Cardiac septum (tissue), 1 donor: ENCODE measurements at regions of chr1 and their contacts with region 1.

Region 1: GRCh38 chr1:175481126-175482066 is 262.0 kb downstream of the TNR start:
- DNase-seq: no peak

Region 2: GRCh38 chr1:175742790-175743459 is 261.5 kb after region 1 on chr1:
- intact Hi-C with region 1: loop called (anchors 10 kb)
- DNase-seq: peak; percentile 15

Region 3: DNA sequence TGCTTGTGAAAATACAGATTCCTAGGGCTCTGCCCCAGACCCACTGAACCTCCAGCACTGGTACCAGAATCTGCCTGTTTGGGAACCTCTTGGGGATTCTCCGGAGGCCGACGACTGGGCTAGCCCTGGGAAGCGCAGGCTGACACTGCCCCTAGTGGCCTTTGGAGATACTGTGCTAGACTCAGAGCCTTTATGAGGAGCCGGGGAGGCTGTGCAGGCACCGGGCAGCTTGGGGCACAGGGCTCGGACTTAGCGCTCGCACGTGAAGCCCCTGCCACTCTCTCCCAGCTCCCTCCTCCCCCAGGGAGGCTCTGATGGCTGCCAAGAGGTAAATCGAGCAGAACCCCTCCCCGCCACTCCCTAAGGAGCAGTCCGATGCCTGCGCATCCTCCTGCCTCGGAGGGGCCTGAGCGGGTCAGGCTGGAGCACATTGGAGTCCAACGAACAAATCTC is 406.6 kb after region 1 on chr1:
- intact Hi-C with region 1: loop called (anchors 5 kb)
- DNase-seq: peak; percentile 76

Region 4: DNA sequence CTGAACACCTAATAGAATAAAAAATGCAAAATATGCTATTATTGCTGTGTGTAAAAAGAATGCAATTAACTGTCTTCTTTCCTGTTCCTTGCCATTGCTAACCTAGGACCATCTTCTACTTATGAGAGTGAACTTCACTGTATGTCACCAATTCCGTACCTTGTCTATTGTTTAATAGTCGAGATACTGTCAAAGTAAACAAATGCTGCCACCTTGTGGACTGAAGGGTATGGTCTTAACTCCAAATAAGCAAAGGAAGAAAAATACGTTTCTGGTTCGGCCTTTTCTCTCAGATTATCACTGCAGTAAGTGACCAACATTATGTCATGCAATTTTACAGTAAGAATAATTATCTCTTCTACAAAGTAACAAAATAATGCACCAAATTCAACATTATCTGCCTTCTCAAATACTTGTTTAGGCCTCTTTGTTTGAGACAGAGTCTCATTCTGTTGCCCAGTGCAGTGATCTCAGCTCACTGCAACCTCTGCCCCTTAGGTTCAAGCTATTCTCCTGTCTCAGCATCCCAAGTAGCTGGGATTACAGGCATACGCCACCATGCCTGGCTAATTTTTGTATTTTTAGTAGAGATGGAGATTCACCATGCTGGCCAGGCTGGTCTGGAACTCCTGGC is 592.2 kb after region 1 on chr1:
- intact Hi-C with region 1: loop called (anchors 2 kb)
- DNase-seq: no peak